Dorsolateral prefrontal cortex (tissue), 120 donors: ENCODE measurements at regions of chr15 and their contacts with region 1.

Region 1: GRCh38 chr15:50876989-50877360 is 31.5 kb upstream of the AP4E1 start:
- DNase-seq: peak in 8 of 10 donors; percentile 55 to 82 (median 60)
- H3K4me3 ChIP-seq: peak overlapping the region; percentile 8 to 68 (median 49)
- H3K27ac ChIP-seq: peak overlapping the region in 20 of 59 donors; percentile 4 to 72 (median 39)
- H3K27me3 ChIP-seq: no peaks in the 10 kb centered on the region
- CTCF ChIP-seq: peak; percentile 89 to 99 (median 95)

Region 2: DNA sequence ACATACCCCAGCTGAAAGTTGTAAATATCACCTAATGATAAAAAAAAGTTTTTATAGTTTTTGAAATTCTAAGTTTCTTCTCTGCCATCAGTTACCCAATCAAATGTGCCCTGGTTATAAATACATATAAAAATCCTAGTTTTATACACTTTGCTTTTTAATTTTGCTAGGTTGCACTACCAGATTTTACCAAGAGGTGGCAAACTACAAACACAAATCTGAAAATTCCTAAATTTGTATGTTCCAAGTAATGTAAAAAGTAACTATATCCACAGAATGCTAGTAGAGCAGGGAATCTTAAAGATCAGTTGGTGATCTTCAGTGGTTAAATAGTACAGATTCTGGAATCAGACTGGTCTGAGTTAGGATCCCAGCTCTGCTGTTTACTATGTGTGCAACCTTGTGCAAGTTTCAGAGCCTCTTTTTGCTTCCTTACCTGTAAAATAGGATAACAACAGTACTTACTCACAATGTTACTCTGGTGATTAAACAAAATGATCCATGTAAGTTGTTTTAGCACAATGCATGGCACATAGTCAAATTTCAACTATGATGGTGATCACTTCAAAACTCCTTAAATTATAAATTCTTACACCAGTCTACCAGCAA is 201.3 kb before region 1 on chr15:
- intact Hi-C with region 1: loop called in 1 of 2 experiments (anchors 1 kb)
- DNase-seq: no peak
- H3K4me3 ChIP-seq: no peak overlapping the region
- H3K27ac ChIP-seq: no peak overlapping the region
- H3K27me3 ChIP-seq: no peaks in the 10 kb centered on the region
- CTCF ChIP-seq: peak; percentile 68 to 96 (median 84)

Region 3: DNA sequence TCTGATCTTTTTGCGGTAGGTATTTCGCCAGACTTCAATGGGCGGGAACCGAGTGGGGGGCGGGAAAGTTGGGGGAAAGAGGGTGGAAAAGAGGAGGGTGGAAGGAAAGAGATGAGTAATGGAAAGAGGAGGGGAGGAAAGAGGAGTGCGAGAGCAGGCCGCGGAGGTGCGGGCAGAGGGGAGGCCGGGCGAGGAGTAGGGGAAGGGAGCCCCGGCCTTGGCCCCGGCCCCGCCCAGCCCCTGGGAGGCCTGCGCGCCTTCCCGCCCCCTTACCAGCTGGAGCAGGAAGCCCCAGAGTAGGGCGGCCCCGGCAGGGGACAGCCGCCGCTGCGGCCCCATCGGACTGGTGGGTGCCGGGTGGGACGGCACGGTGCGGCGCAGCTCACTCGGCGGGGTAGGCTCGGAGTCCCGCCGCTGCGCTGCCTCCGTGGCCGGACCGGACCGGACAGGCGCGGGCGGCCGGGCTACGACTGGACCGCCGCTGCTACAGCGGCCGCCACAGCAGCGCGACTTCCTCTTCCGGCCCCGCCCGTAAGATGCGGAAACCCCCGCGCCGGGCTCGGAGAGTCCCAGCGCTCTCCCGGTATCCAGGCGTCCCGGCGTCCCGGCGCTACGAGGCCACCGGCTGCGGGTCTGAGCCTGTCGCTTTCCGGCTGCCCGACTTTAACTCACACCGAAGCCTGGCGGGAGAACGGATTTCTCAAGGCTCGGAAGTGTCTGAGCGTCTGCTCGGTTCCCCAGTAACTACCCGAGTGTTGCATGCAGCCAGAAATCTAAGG is 111.6 kb before region 1 on chr15 and contains the start of gene SPPL2A:
- intact Hi-C with region 1: loop called in 1 of 2 experiments (anchors 10 kb)
- DNase-seq: peak; percentile 53 to 89 (median 74)
- H3K4me3 ChIP-seq: peak within 1 kb of the TSS; percentile 61 to 95 (median 88)
- H3K27ac ChIP-seq: peak within 1 kb of the TSS; percentile 57 to 96 (median 90)
- H3K27me3 ChIP-seq: no peaks in the 10 kb centered on the region
- CTCF ChIP-seq: peak in 11 of 56 donors; percentile 4 to 33 (median 15)
- total RNA-seq, gene SPPL2A: 29.9 to 66.0 (median 45.8) TPM

Region 4: GRCh38 chr15:51274946-51275345 is 398.0 kb after region 1 on chr15:
- intact Hi-C with region 1: no loop called
- DNase-seq: no peak
- H3K4me3 ChIP-seq: no peak overlapping the region
- H3K27ac ChIP-seq: no peak overlapping the region
- H3K27me3 ChIP-seq: peaks cover 0 to 7% (median 0%) of the 10 kb centered on the region in 45 donors
- CTCF ChIP-seq: no peak